ENCODE measurements at regions of chr17 and their contacts with region 1.

Region 1: DNA sequence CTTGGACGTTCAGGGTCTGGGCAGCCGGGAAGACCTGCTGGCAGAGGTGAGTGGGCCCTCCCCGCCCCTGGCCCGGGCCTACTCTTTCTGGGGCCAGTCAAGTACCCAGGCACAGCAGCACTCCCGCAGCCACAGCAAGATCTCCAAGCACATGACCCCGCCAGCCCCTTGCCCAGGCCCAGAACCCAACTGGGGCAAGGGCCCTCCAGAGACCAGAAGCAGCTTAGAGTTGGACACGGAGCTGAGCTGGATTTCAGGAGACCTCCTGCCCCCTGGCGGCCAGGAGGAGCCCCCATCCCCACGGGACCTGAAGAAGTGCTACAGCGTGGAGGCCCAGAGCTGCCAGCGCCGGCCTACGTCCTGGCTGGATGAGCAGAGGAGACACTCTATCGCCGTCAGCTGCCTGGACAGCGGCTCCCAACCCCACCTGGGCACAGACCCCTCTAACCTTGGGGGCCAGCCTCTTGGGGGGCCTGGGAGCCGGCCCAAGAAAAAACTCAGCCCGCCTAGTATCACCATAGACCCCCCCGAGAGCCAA is 8.6 kb upstream of the ABCC3 start:
- DNase-seq: peak; percentile 78
- H3K4me3 Mint-ChIP-seq: no peak overlapping the region
- H3K27ac Mint-ChIP-seq: no peak overlapping the region
- H3K4me1 Mint-ChIP-seq: no peaks in the 10 kb centered on the region
- H3K27me3 Mint-ChIP-seq: peaks cover 31% of the 10 kb centered on the region

Region 2: DNA sequence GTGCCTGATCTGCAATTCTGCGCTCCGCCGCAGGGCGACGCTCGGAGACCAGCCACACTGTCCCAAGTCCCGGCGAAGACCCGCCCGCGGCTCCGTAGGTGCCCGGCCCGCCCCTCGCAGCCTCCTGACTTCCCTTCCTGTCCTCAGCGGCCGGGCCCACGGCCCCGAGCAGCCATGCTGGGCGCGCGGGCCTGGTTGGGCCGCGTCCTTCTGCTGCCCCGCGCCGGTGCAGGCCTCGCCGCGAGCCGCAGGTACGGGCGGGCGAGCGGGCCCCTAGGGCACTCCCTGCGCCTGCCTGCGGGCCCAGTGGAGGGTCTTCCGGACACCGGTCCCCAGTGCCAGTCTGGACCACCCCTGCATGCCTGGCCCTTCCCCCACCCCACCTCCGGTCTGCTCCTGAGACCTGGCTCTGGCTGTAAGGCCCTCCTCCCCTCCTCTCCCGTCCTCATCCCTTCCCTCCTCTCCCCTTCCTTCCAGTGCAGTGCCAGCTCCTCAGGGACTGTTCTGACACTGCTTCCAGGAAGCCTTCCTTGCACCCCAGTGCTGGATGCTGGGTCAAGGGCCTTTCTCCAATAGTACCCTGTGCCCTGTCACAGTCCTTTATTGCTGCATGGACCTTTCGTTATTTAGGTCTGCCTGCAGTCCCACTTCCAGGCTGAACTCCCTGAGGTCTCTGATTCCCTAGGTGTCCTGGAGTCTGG is 78.9 kb before region 1 on chr17 and contains the start of gene SPATA20:
- CTCF ChIA-PET with region 1: interaction called, 31 read pairs
- POLR2A ChIA-PET with region 1: no interaction called
- intact Hi-C with region 1: loop called (anchors 1 kb)
- DNase-seq: peak; percentile 92
- H3K4me3 Mint-ChIP-seq: peak within 1 kb of the TSS; percentile 71
- H3K27ac Mint-ChIP-seq: peak within 1 kb of the TSS; percentile 58
- H3K4me1 Mint-ChIP-seq: peaks cover 8% of the 10 kb centered on the region
- H3K27me3 Mint-ChIP-seq: peaks cover 6% of the 10 kb centered on the region
- total RNA-seq, gene SPATA20: 22.8 to 23.4 TPM

Region 3: GRCh38 chr17:50613007-50613992 is 12.8 kb before region 1 on chr17:
- CTCF ChIA-PET with region 1: interaction called, 10 read pairs
- POLR2A ChIA-PET with region 1: no interaction called
- intact Hi-C with region 1: no loop called
- DNase-seq: no peak
- H3K4me3 Mint-ChIP-seq: no peak overlapping the region
- H3K27ac Mint-ChIP-seq: no peak overlapping the region
- H3K4me1 Mint-ChIP-seq: peaks cover 4% of the 10 kb centered on the region
- H3K27me3 Mint-ChIP-seq: no peaks in the 10 kb centered on the region

Region 4: GRCh38 chr17:50638851-50639767 is 13.0 kb after region 1 on chr17:
- CTCF ChIA-PET with region 1: interaction called, 21 read pairs
- POLR2A ChIA-PET with region 1: no interaction called
- intact Hi-C with region 1: no loop called
- DNase-seq: no peak
- H3K4me3 Mint-ChIP-seq: no peak overlapping the region
- H3K27ac Mint-ChIP-seq: no peak overlapping the region
- H3K4me1 Mint-ChIP-seq: no peaks in the 10 kb centered on the region
- H3K27me3 Mint-ChIP-seq: peaks cover 39% of the 10 kb centered on the region

Region 5: DNA sequence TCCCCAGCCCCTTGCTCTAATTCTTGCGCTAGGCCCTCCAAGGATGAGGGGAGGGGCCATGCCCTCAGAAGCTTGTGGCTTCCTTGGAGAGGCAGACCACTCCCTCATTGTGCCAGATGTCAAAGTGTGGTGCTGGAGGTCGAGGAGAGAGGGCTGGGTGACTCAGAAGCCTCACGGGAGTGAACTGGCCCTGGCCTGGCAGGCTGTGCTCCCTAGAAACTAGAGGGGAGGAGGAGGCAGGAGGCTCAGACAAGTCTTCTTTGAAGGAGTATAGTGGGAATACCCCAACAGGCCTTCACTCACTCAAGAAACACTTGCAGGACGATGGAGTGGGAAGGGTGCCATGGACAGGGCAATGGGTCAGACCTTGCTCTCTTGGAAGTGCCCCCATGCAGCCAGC is 63.1 kb after region 1 on chr17:
- CTCF ChIA-PET with region 1: interaction called, 45 read pairs
- POLR2A ChIA-PET with region 1: no interaction called
- intact Hi-C with region 1: loop called (anchors 2 kb)
- DNase-seq: no peak
- H3K4me3 Mint-ChIP-seq: no peak overlapping the region
- H3K27ac Mint-ChIP-seq: no peak overlapping the region
- H3K4me1 Mint-ChIP-seq: no peaks in the 10 kb centered on the region
- H3K27me3 Mint-ChIP-seq: no peaks in the 10 kb centered on the region

Region 6: DNA sequence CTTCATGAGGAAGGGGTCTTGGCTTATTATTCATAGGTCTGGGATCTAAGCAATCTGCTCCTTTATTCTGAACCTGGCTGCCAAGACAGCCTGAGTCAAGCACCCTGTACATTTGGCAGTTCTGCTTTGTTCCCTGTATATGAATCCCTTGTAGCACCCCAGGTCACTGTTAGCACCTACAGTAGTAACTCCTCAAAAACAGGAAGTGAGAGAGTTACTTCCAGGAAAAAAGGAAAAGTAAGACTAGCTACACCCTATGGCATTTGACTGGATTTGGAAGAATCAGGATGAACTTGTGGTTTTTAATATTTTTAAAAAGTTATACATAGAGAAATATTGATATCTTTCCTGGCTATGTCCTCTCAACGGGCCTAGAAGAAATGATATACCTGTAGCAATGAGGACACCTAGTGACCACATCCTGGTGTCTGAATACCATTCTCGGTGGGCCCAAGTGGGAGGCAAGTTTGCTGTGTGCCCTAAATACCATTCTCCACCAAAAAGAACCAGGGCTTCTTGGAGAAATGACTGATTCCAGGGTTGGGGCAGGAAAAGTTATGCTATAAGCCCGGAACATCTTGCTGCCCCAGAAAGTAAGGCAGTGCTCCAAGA is 71.7 kb after region 1 on chr17:
- CTCF ChIA-PET with region 1: interaction called, 45 read pairs
- POLR2A ChIA-PET with region 1: no interaction called
- intact Hi-C with region 1: loop called (anchors 2 kb)
- DNase-seq: no peak
- H3K4me3 Mint-ChIP-seq: no peak overlapping the region
- H3K27ac Mint-ChIP-seq: peak overlapping the region; percentile 38
- H3K4me1 Mint-ChIP-seq: peaks cover 22% of the 10 kb centered on the region
- H3K27me3 Mint-ChIP-seq: no peaks in the 10 kb centered on the region

Region 7: DNA sequence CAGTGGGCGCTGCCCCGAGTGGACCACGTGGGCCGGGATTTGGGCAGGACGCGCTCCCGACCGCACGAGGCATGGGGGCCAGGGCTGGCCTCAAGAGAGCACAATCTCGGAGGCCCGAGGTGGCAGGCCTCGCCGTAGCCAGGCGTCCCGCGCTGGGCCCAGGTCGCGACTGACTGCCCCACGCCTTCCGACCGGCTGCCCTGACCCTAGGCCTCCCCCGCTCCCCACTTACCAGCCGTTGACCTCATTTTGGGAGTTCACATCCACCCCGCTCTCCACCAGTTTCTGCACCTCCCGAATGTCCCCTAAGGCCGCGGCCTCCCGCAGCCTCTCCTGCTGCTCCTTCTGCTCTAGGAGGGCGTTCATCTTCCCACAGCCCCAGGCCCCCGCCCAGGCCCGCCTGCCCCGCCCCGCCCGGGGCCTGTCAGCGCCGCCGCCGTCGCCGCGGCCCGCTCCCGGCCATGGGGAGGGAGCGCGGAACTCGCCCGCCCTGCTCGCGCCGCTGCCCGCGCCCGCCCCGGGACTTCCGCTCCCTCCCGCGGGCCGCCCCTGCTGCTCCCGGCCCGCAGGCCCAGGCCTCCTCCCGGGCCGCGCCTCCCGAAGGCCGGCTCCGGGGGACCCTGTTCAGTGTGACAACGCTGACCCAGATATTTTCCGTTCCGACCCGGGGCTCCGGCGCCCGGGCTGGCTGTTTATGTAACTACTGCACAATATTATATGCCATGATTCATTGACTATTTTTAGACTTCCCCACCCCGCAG is 81.4 kb after region 1 on chr17 and contains the start of gene ANKRD40:
- CTCF ChIA-PET with region 1: interaction called, 10 read pairs
- POLR2A ChIA-PET with region 1: no interaction called
- intact Hi-C with region 1: no loop called
- DNase-seq: peak; percentile 95
- H3K4me3 Mint-ChIP-seq: peak within 1 kb of the TSS; percentile 96
- H3K27ac Mint-ChIP-seq: peak within 1 kb of the TSS; percentile 96
- H3K4me1 Mint-ChIP-seq: peaks cover 48% of the 10 kb centered on the region
- H3K27me3 Mint-ChIP-seq: no peaks in the 10 kb centered on the region
- total RNA-seq, gene ANKRD40: 27.4 to 27.8 TPM

Region 8: DNA sequence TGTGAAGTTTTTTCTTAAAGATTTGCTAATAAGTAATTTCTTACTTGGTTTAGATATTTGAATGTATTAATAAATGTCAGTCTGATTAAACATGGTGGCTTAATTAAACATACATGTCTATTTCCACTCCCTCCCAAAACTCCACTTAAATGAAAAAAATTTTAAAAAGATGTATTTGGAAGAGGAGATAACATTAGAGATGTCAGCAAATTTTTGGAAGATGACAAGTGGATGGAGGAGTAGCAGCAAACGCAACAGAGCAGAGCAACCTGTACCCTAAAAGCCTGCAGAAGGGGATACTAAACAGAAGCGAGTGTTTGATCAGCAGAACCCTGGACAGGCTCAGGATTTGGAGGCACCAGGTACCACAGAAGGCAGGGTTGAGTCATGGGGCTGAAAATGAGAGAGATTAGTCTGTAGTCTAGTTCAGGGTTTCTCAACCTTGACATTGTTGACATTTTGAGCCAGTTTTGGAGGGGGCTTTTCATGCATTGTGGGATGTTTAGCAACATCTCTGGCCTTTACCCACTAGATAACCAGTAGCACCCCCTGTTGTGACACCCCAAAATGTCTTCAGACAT is 111.1 kb after region 1 on chr17:
- CTCF ChIA-PET with region 1: no interaction called
- POLR2A ChIA-PET with region 1: no interaction called
- intact Hi-C with region 1: no loop called
- DNase-seq: peak; percentile 40
- H3K4me3 Mint-ChIP-seq: no peak overlapping the region
- H3K27ac Mint-ChIP-seq: peak overlapping the region; percentile 64
- H3K4me1 Mint-ChIP-seq: peaks cover 55% of the 10 kb centered on the region
- H3K27me3 Mint-ChIP-seq: no peaks in the 10 kb centered on the region

Measured in activated CD4-positive, alpha-beta memory T cell treated with anti-CD3 and anti-CD28 coated beads for 36 hours (primary cell).